Panc1 (cell line): ENCODE measurements at regions of chr3 and their contacts with region 1.

Region 1: GRCh38 chr3:32934150-32934742 is 17.2 kb upstream of the CCR4 start:
- DNase-seq: no peak
- ATAC-seq: no peak
- H3K4me3 ChIP-seq: no peak overlapping the region
- H3K27ac ChIP-seq: no peak overlapping the region
- H3K4me1 ChIP-seq: no peaks in the 10 kb centered on the region
- H3K27me3 ChIP-seq: no peaks in the 10 kb centered on the region
- CTCF ChIP-seq: peak; percentile 76

Region 2: GRCh38 chr3:32733631-32734229 is 200.5 kb before region 1 on chr3:
- CTCF ChIA-PET with region 1: interaction called, 3 read pairs
- POLR2A ChIA-PET with region 1: no interaction called
- in situ Hi-C with region 1: no loop called
- intact Hi-C with region 1: loop called (anchors 2 kb)
- DNase-seq: peak; percentile 15
- ATAC-seq: no peak
- H3K4me3 ChIP-seq: no peak overlapping the region
- H3K27ac ChIP-seq: no peak overlapping the region
- H3K4me1 ChIP-seq: no peaks in the 10 kb centered on the region
- H3K27me3 ChIP-seq: no peaks in the 10 kb centered on the region
- CTCF ChIP-seq: no peak; the same call in 1 of the 2 replicates

Region 3: DNA sequence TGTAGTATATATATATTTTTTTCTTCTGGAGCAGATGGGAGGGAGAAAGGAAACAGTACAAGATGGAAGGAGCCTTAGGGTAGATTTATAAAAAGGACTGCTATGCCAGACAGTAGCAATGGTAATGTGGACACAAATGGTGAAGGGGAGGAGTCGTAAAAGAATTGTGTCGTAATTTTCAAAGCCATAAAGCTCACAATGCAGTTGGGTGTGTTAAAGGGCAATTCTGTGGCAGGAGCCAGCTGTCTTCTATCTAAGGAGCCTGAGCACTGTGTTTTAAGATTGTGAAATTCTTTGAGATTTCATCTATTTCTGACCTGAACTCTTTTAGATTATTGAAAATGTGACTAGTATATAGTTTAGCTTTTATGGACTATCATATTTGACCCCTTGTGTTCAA is 190.3 kb before region 1 on chr3:
- CTCF ChIA-PET with region 1: no interaction called
- POLR2A ChIA-PET with region 1: no interaction called
- in situ Hi-C with region 1: no loop called
- intact Hi-C with region 1: no loop called
- DNase-seq: no peak
- ATAC-seq: no peak
- H3K4me3 ChIP-seq: no peak overlapping the region
- H3K27ac ChIP-seq: no peak overlapping the region
- H3K4me1 ChIP-seq: no peaks in the 10 kb centered on the region
- H3K27me3 ChIP-seq: no peaks in the 10 kb centered on the region
- CTCF ChIP-seq: no peak

Region 4: DNA sequence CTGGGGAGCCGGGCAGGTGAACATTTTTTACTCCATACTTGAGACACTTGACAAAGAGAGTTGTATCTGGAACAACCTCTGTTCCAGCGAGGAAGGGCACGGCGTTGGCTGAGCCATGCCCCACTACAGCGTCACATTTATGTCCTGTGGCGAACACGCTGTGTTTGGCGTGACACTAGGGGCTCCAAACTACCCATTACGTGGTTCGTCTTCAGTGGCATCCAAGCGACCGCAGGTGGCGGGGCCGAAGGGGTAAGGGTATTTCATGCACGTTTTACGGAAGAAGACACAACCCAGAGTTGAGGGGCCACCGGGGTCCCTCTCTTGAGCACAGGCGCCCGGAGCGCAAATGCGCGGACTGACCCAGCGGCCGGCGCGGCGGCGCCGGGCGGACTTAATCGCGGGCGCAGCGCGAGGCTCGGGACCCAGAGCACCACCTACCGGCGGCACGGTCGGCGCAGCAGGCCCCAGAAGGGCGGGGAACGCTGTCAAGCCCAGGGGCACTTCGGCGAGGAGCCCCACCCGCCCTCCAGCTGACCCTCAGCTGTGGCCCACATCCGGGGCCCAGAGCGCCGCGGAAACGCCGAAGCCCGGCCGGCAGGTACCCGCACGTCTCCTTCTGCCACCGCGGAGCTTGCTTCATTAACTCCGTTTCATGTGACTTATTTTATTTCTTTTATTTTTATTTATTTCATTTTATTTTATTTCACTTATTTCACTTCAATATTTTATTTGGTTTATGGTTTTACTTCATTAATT is 152.9 kb before region 1 on chr3:
- CTCF ChIA-PET with region 1: no interaction called
- POLR2A ChIA-PET with region 1: no interaction called
- in situ Hi-C with region 1: no loop called
- intact Hi-C with region 1: loop called (anchors 10 kb)
- DNase-seq: peak; percentile 50
- ATAC-seq: peak; percentile 95
- H3K4me3 ChIP-seq: peak overlapping the region; percentile 54 to 66
- H3K27ac ChIP-seq: no peak overlapping the region
- H3K4me1 ChIP-seq: no peaks in the 10 kb centered on the region
- H3K27me3 ChIP-seq: no peaks in the 10 kb centered on the region
- CTCF ChIP-seq: peak; percentile 93

Region 5: GRCh38 chr3:32821686-32822296 is 112.5 kb before region 1 on chr3:
- CTCF ChIA-PET with region 1: no interaction called
- POLR2A ChIA-PET with region 1: no interaction called
- in situ Hi-C with region 1: no loop called
- intact Hi-C with region 1: no loop called
- DNase-seq: no peak
- ATAC-seq: no peak
- H3K4me3 ChIP-seq: no peak overlapping the region
- H3K27ac ChIP-seq: no peak overlapping the region
- H3K4me1 ChIP-seq: no peaks in the 10 kb centered on the region
- H3K27me3 ChIP-seq: no peaks in the 10 kb centered on the region; the same call in none of the 2 replicates
- CTCF ChIP-seq: no peak

Region 6: DNA sequence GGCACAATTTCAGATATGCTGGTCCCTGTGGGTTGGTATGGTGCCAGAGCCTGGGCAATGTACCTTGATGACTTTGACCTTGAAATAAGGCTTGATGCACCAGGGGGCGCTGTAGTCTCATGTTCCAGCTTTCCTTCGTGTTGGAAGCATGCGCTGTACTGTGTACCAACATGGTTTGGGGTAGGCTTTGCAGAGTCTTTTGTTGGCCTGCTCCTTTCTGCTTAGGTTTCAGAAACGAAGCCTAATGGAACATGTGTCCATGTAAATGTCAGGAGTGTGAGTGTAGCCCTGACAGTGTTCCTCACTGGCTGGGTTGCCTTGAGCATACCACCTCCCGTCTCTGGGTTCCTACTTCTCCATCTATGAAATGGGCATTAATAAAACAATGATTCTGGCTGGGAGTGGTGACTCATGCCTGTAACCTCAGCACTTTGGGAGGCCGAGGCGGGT is 13.6 kb after region 1 on chr3:
- CTCF ChIA-PET with region 1: no interaction called
- POLR2A ChIA-PET with region 1: no interaction called
- in situ Hi-C with region 1: no loop called
- intact Hi-C with region 1: no loop called
- DNase-seq: peak; percentile 65
- ATAC-seq: peak; percentile 96
- H3K4me3 ChIP-seq: no peak overlapping the region
- H3K27ac ChIP-seq: no peak overlapping the region
- H3K4me1 ChIP-seq: no peaks in the 10 kb centered on the region
- H3K27me3 ChIP-seq: no peaks in the 10 kb centered on the region
- CTCF ChIP-seq: peak; percentile 76

Region 7: GRCh38 chr3:33250712-33251111 is 316.5 kb after region 1 on chr3:
- CTCF ChIA-PET with region 1: no interaction called
- POLR2A ChIA-PET with region 1: no interaction called
- in situ Hi-C with region 1: no loop called
- intact Hi-C with region 1: no loop called
- DNase-seq: no peak
- ATAC-seq: no peak
- H3K4me3 ChIP-seq: no peak overlapping the region
- H3K27ac ChIP-seq: no peak overlapping the region
- H3K4me1 ChIP-seq: no peaks in the 10 kb centered on the region
- H3K27me3 ChIP-seq: no peaks in the 10 kb centered on the region
- CTCF ChIP-seq: no peak